Activated T-helper 1 cell treated with anti-CD3 and anti-CD28 coated beads, Interleukin-12 subunit alpha, Interleukin-12 subunit beta, Interleukin-2, Interleukin-4 antibody, amounts not matched to agents 30 ng/mL and 10 ng/mL and 1 ng/mL, durations not matched to agents 14 hours and 24 hours and 36 hours (primary cell): ENCODE measurements at regions of chr18 and their contacts with region 1.

Region 1: GRCh38 chr18:13216092-13216582 is 2.4 kb upstream of the LDLRAD4 start:
- DNase-seq: peak; percentile 39
- H3K4me3 Mint-ChIP-seq: peak overlapping the region; percentile 87
- H3K27ac Mint-ChIP-seq: peak overlapping the region; percentile 92
- H3K4me1 Mint-ChIP-seq: peaks cover 31% of the 10 kb centered on the region
- H3K27me3 Mint-ChIP-seq: peaks cover 32% of the 10 kb centered on the region

Region 2: DNA sequence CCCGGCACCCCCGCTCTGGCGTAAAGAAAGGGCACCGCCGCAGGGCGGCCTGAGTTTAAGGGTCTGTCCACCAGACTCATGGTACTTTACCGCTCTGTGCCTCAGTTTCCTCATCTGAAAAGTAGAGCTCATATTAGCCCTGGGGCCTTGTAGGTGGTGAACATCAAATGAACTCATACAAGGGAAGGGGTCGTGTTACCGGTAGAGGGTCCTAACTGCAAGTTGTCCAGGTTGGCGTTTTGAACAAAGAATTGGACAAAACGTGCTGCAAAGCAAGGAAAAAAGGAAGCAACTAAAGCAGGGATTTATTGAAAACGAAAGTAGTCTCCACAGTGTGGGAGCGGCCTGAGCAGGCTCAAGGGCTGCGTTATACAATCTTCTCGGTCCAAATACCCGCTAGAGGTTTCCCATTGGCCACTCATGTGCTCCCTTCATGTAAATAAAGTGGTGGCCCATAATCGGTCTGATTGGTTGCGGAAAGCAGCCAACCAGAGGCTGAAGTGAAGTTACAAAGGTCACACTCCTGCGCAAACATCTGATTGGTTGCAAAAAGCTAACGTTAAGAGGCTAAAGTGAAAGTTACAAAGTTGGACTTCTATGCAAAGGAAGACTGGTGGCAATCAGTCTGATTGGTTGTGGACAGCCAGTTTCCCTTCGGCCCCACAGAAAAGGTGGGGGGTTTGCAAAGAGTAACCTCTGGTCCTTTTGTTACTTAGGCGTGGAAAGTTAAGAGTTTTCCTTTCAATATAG is 78.3 kb before region 1 on chr18:
- intact Hi-C with region 1: loop called (anchors 5 kb)
- DNase-seq: peak; percentile 76
- H3K4me3 Mint-ChIP-seq: peak overlapping the region; percentile 91
- H3K27ac Mint-ChIP-seq: peak overlapping the region; percentile 79
- H3K4me1 Mint-ChIP-seq: peaks cover 21% of the 10 kb centered on the region
- H3K27me3 Mint-ChIP-seq: peaks cover 11% of the 10 kb centered on the region

Region 3: GRCh38 chr18:13313006-13313686 is 97.0 kb after region 1 on chr18:
- intact Hi-C with region 1: loop called (anchors 1 kb)
- DNase-seq: no peak
- H3K4me3 Mint-ChIP-seq: no peak overlapping the region
- H3K27ac Mint-ChIP-seq: peak overlapping the region; percentile 30
- H3K4me1 Mint-ChIP-seq: peaks cover 35% of the 10 kb centered on the region
- H3K27me3 Mint-ChIP-seq: no peaks in the 10 kb centered on the region

Region 4: GRCh38 chr18:13447626-13448334 is 231.6 kb after region 1 on chr18:
- intact Hi-C with region 1: loop called (anchors 2 kb)
- DNase-seq: no peak
- H3K4me3 Mint-ChIP-seq: no peak overlapping the region
- H3K27ac Mint-ChIP-seq: no peak overlapping the region
- H3K4me1 Mint-ChIP-seq: peaks cover 21% of the 10 kb centered on the region
- H3K27me3 Mint-ChIP-seq: no peaks in the 10 kb centered on the region

Region 5: DNA sequence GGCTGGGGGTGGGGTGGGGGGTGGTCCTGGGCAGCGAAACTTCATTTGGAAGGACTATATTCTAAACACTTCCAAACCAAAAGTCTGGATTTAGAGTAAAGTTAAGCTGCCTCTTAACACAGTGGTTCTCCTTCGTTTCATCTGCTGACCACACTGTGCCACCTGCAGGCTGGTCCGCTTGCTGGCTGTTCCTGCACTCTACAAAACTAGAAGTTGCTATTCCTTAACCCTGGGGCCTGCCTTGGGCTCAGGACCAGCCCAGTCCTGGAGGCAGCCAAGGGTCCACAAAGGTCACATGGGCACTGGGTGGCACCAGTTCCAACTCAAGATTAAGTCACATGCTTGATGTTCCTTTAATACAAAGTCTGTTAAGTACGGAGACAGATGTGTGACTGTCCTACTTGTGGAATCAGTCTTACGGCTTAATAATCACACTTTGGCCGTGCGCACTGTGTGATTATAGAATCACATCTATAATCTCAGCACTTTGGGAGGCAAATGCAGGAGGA is 314.8 kb after region 1 on chr18:
- intact Hi-C with region 1: loop called (anchors 1 kb)
- DNase-seq: no peak
- H3K4me3 Mint-ChIP-seq: no peak overlapping the region
- H3K27ac Mint-ChIP-seq: no peak overlapping the region
- H3K4me1 Mint-ChIP-seq: peaks cover 29% of the 10 kb centered on the region
- H3K27me3 Mint-ChIP-seq: no peaks in the 10 kb centered on the region

Region 6: GRCh38 chr18:13629841-13630715 is 413.9 kb after region 1 on chr18:
- intact Hi-C with region 1: loop called (anchors 1 kb)
- DNase-seq: no peak
- H3K4me3 Mint-ChIP-seq: no peak overlapping the region
- H3K27ac Mint-ChIP-seq: no peak overlapping the region
- H3K4me1 Mint-ChIP-seq: peaks cover 15% of the 10 kb centered on the region
- H3K27me3 Mint-ChIP-seq: no peaks in the 10 kb centered on the region